Calu3 (cell line): ENCODE measurements at regions of chr12 and their contacts with region 1.

Region 1: DNA sequence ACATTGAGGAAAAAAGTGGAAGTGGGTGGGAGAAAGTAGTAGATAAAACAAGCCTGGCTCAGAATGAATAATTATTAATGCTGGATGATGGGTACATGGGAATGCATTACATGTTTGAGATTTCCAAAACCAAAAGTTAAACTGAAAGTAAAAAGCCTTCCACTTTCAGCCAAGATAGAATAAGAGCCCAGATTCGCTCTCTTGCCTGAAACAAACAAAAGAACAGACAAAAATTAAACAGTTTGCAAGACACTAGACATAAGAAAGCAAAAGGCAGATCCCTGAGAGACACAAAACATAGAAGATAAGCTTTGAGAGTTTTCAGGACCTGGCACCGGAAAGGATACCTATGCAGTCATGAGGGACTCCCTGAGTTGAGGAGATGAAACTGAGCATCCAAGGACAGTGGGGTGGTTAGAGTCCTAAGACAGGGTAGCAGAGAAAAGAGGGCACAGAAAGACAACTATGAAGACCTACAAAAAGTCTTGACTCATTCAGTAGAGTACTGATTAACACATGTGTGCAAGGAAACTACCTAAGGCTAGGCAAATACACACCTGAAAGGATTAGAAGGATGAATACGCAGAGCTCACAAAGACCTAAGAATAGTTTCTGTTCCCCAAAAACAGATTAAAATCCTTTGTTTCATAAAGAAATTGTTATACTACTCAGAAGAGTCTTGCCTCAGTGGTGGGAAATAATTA is 54.1 kb downstream of the CEP83 start:
- DNase-seq: no peak
- H3K4me3 Mint-ChIP-seq: no peak overlapping the region
- H3K27ac Mint-ChIP-seq: no peak overlapping the region
- H3K4me1 Mint-ChIP-seq: no peaks in the 10 kb centered on the region
- H3K27me3 Mint-ChIP-seq: no peaks in the 10 kb centered on the region
- CTCF ChIP-seq: no peak

Region 2: DNA sequence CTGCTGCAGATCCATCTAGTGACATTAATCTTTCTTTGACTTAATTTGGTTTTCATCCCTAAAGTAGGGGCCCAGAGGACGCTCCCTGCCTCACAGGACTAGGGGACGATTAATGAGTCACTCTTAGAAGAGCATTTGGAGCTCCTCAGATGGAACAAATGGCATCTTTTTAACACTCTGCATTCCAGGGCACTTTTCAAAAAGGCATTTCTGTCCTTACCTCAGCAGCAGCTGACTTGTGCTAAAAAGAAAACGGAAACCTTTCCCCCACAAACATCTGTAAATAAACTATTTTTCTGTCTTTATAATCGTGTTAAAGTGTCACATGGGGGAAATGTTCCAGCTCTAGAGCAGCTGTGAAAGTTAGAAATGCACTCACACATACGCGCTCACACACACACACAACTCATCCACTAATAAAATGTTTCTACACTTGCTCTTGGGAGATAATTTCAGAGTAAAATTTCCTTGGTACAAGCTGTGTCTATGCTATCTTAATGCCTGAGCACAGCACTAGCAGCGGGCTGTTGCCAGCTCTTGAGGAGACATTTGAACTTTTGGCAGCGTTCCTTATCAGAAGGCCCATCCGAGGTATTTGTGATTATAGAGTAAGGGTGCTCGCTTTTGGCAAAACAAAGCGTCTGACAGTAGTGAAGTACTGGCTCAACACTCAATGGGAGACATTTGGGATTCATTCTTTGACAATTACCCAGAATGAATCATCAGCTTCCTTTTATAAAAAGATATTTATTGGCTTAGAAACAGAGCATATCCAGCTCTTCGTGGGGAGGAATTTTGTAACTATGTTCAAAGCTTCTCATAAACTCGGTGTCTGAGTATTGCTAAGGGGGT is 115.9 kb before region 1 on chr12:
- CTCF ChIA-PET with region 1: no interaction called
- intact Hi-C with region 1: no loop called
- DNase-seq: no peak
- H3K4me3 Mint-ChIP-seq: no peak overlapping the region
- H3K27ac Mint-ChIP-seq: no peak overlapping the region
- H3K4me1 Mint-ChIP-seq: no peaks in the 10 kb centered on the region
- H3K27me3 Mint-ChIP-seq: no peaks in the 10 kb centered on the region
- CTCF ChIP-seq: no peak

Region 3: DNA sequence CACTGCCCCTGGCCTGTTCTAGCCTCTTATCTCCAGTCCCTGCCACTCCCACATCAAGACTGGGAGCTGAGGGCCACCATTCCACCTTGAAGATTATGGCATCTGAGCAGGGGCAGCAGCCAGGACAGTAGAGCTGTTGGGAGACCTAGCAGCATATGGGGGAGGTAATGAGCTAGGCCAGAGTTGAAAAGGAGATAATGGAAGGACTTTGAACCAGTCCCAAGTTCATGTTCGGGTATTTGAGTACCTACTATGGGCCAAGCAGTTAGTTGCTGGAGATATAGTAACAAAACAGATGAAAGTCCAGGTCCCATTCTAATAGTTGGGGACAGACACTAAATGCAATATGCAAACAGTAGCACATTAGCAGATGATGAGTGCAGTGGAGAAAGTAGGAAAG is 105.7 kb before region 1 on chr12:
- CTCF ChIA-PET with region 1: no interaction called
- intact Hi-C with region 1: no loop called
- DNase-seq: no peak
- H3K4me3 Mint-ChIP-seq: no peak overlapping the region
- H3K27ac Mint-ChIP-seq: no peak overlapping the region
- H3K4me1 Mint-ChIP-seq: no peaks in the 10 kb centered on the region
- H3K27me3 Mint-ChIP-seq: no peaks in the 10 kb centered on the region
- CTCF ChIP-seq: no peak

Region 4: DNA sequence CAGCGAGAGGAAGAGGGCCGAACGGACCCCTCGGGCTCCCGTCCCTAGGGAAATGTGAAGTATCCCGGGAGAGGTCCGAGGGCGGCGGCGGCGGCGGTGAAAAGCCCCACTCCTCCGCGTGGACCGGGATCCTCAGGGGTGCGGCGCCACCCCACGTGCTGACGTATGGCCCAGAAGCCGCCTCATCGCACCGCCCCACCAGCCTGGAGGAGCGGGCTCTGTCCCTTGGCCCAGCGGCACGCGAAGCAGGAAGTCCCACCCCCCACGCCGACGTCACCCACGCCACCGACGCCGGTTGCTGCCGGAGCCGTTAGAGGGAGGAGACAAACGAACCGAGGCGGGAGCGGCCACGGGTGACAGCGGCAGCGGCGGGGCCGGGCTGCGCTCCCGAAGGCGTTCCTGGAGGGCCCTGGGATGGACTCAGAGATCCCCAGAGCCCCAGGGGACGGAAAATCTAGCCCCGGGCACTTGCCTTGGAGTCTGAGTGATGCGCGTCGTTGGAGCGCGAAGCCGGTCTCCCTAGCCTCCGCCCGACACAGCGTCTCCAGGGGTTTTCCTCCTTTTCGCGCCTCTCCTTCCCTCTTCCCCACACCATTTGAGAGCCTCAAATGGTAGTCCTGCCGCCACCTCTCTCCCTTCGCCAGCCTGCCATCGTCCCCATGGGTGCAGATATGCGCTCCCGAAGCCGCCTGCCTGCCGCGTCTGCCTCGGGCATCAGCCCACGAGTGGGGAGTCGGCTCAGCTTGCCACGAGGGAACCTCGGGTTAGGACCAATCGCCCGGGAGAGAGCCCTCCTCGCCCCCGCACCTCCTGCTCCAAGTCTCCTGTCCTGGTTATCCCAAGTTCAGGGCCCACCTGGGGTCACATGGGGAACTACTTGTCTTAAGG is 54.4 kb after region 1 on chr12 and contains the start of gene CEP83:
- CTCF ChIA-PET with region 1: no interaction called
- intact Hi-C with region 1: loop called (anchors 2 kb)
- DNase-seq: peak; percentile 98
- H3K4me3 Mint-ChIP-seq: peak within 1 kb of the TSS; percentile 88
- H3K27ac Mint-ChIP-seq: peak within 1 kb of the TSS; percentile 85
- H3K4me1 Mint-ChIP-seq: peaks cover 9% of the 10 kb centered on the region
- H3K27me3 Mint-ChIP-seq: no peaks in the 10 kb centered on the region
- CTCF ChIP-seq: no peak
- total RNA-seq, gene CEP83: 28.3 and 28.9 TPM in 2 replicates